Right cardiac atrium (tissue), 5 donors: ENCODE measurements at regions of chr9 and their contacts with region 1.

Region 1: DNA sequence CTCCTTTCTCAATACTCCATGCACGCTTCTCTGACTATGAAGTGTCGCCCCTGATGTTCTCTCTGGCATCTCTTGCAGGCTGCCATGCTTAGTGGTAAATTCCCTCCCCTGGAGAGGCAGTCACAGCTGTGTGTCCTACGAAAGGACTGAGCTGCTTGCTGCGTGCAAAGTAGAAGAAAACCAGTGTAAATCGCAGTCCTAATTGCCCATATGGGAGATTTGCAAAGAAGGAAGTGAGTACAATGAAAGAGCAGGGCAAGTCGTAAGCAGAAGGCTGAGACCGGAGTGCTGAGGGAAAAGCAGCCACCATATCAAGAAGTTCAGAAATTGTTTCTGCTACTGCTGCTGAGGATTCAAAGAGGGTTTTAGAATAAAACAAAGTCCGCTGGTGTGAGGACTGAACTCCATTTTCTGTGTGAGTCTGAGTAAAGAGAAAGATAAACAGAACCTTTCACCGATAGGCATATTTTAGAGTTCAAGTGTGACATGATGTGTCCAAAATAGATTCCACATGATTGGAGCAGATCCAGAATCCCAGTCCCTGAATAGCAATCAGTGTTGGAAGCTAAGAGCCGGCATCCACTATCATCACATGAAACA is 507.8 kb upstream of the MPDZ start:
- DNase-seq: no peak
- ATAC-seq: peak; percentile 85 to 90
- H3K4me3 ChIP-seq: peak overlapping the region; percentile 1
- H3K27ac ChIP-seq: peak overlapping the region; percentile 94
- H3K4me1 ChIP-seq: no peaks in the 10 kb centered on the region
- H3K27me3 ChIP-seq: no peaks in the 10 kb centered on the region

Region 2: GRCh38 chr9:13734601-13735000 is 52.7 kb before region 1 on chr9:
- intact Hi-C with region 1: loop called in 1 of 4 experiments (anchors 10 kb)
- DNase-seq: no peak
- ATAC-seq: no peak
- H3K4me3 ChIP-seq: no peak overlapping the region
- H3K27ac ChIP-seq: no peak overlapping the region
- H3K4me1 ChIP-seq: no peaks in the 10 kb centered on the region
- H3K27me3 ChIP-seq: no peaks in the 10 kb centered on the region